CD8-positive, alpha-beta memory T cell (primary cell): ENCODE measurements at regions of chr17 and their contacts with region 1.

Region 1: DNA sequence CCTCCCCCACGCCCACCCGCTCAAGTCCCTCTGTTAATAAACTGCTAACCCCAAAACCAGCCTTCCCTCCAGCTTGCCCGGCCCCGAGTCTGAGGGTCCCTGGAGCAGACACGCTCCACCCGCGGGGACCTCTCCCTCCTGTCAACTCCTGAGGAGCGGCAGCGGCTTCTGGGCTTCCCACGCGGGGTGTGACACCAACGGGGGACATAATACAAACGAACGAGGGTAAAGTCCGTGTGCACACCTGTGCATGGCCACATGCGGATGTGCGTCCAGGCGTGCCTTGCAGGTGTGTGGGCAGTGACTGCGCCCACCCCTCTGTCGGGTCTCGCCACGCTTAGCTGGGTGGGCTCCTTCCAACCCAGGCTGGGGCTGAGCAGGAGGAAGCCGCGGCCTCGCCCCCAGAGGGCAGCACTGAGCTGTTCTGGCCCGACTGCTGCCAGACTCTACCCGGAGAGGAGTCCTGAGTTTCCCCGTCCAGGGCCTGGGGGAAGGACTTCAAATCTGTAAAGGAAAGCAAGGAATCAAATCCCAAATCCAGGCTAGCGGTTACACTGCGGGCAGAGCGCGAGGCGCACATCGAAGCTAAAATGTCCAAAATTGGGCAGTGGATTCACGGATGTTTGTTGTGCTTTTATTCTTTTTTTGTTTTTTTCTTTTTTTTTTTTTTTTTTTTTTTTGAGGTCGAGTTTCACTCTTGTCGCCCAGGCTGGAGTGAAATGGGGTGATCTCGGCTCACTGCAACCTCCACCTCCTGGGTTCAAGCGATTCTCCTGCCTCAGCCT is 24.2 kb upstream of the KRT17 start:
- DNase-seq: peak; percentile 77 to 86 (median 81)
- H3K4me3 ChIP-seq: peak overlapping the region; percentile 75
- H3K4me3 Mint-ChIP-seq: peak overlapping the region; percentile 44 to 83 (median 78)
- H3K27ac ChIP-seq: no peak overlapping the region
- H3K27ac Mint-ChIP-seq: peak overlapping the region in 6 of 8 donors; percentile 20 to 89 (median 70)
- H3K4me1 ChIP-seq: peaks cover 14% of the 10 kb centered on the region
- H3K4me1 Mint-ChIP-seq: peaks cover 9 to 15% (median 11%) of the 10 kb centered on the region in 3 donors
- H3K27me3 ChIP-seq: no peaks in the 10 kb centered on the region
- H3K27me3 Mint-ChIP-seq: peaks cover 0 to 1% of the 10 kb centered on the region in 2 donors

Region 2: GRCh38 chr17:41548844-41549595 is 99.6 kb before region 1 on chr17:
- CTCF ChIA-PET with region 1: interaction called, 54 read pairs
- POLR2A ChIA-PET with region 1: interaction called, 5 read pairs
- DNase-seq: peak; percentile 73 to 86 (median 76)
- H3K4me3 ChIP-seq: peak overlapping the region; percentile 19
- H3K4me3 Mint-ChIP-seq: peak overlapping the region; percentile 0 to 64 (median 48)
- H3K27ac ChIP-seq: peak overlapping the region; percentile 32
- H3K27ac Mint-ChIP-seq: peak overlapping the region in 7 of 8 donors; percentile 1 to 83 (median 75)
- H3K4me1 ChIP-seq: peaks cover 13% of the 10 kb centered on the region
- H3K4me1 Mint-ChIP-seq: peaks cover 11 to 16% (median 15%) of the 10 kb centered on the region in 3 donors
- H3K27me3 ChIP-seq: no peaks in the 10 kb centered on the region
- H3K27me3 Mint-ChIP-seq: peaks cover 12 to 17% of the 10 kb centered on the region in 2 donors

Region 3: GRCh38 chr17:41658846-41659245 is 10.2 kb after region 1 on chr17:
- CTCF ChIA-PET with region 1: interaction called, 311 read pairs
- POLR2A ChIA-PET with region 1: interaction called, 8 read pairs
- DNase-seq: no peak
- H3K4me3 ChIP-seq: no peak overlapping the region
- H3K4me3 Mint-ChIP-seq: no peak overlapping the region
- H3K27ac ChIP-seq: no peak overlapping the region
- H3K27ac Mint-ChIP-seq: no peak overlapping the region
- H3K4me1 ChIP-seq: no peaks in the 10 kb centered on the region
- H3K4me1 Mint-ChIP-seq: peaks cover 0 to 6% (median 2%) of the 10 kb centered on the region in 3 donors
- H3K27me3 ChIP-seq: no peaks in the 10 kb centered on the region
- H3K27me3 Mint-ChIP-seq: peaks cover 2 to 3% of the 10 kb centered on the region in 2 donors

Region 4: DNA sequence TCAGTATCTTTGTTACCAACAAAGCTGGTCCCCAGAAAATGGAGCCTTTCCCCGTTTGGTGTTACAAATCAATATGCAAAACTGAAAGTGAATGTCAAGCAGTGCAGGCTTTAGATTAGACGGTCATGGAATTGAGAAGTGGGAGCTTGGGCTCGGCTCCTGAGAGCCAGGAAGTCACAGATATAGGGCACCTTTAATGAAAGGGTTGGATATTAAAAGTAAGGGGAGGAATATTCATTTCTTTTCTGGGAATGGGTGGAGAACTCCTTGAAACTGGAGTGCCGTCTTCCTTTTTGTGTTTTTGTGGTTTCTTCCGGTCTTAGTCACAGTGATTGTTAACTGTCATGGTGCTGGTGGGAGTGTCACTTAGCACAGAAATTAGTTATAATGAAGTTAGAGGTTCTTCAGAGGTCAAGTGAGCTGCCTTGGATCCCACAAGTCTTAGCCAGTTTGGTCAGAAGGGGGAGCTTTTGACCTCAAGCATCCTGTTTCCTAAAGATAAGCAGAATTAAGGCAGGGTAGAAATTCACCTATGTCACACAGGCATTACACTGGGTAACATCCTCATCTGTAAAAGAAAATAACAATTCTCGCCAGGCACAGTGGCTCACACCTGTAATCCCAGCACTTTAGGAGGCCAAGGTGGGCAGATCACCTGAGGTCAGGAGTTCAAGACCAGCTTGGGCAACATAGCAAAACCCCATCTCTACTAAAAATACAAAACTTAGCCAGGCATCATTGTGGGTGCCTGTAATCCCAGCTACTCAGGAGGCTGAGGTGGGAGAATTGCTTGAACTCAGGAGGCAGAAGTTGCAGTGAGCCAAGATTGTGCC is 30.5 kb after region 1 on chr17:
- CTCF ChIA-PET with region 1: interaction called, 10 read pairs
- POLR2A ChIA-PET with region 1: no interaction called
- DNase-seq: peak; percentile 27 to 75 (median 52)
- H3K4me3 ChIP-seq: peak overlapping the region; percentile 55
- H3K4me3 Mint-ChIP-seq: peak overlapping the region; percentile 71 to 92 (median 87)
- H3K27ac ChIP-seq: peak overlapping the region; percentile 62
- H3K27ac Mint-ChIP-seq: peak overlapping the region; percentile 80 to 98 (median 96)
- H3K4me1 ChIP-seq: peaks cover 16% of the 10 kb centered on the region
- H3K4me1 Mint-ChIP-seq: peaks cover 20 to 38% (median 24%) of the 10 kb centered on the region in 3 donors
- H3K27me3 ChIP-seq: no peaks in the 10 kb centered on the region
- H3K27me3 Mint-ChIP-seq: peaks cover 0 to 2% of the 10 kb centered on the region in 2 donors